ENCODE measurements at regions of chr13 and their contacts with region 1.

Region 1: DNA sequence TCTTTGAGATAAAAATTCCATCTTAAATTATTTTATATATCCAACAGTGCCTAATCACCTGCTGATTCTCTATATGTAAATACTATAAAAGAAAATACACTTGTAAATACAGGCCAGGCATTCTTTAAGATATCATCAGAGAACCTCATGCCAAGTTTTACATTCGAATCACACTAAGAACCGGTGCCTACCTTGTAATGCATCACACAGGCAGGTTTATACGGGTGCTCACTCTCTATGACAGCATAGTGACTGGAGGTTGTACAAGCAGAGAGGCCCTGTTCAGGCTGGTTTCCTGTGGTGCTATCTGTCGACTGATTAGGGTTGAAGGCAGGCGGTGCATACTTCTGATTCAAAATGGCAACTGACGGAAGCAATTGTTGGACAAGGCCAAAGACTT is 141.3 kb upstream of the FBXL3 start:
- DNase-seq: no peak
- H3K4me3 ChIP-seq: no peak overlapping the region
- H3K27ac ChIP-seq: no peak overlapping the region
- H3K4me1 ChIP-seq: no peaks in the 10 kb centered on the region
- H3K27me3 ChIP-seq: no peaks in the 10 kb centered on the region
- CTCF ChIP-seq: no peak
- POLR2A ChIP-seq: no peak

Region 2: GRCh38 chr13:77143435-77143834 is 24.8 kb before region 1 on chr13:
- intact Hi-C with region 1: loop called (anchors 2 kb)
- DNase-seq: peak; percentile 58
- H3K4me3 ChIP-seq: no peak overlapping the region
- H3K27ac ChIP-seq: no peak overlapping the region
- H3K4me1 ChIP-seq: no peaks in the 10 kb centered on the region
- H3K27me3 ChIP-seq: no peaks in the 10 kb centered on the region
- CTCF ChIP-seq: no peak
- POLR2A ChIP-seq: no peak

Measured in prostate gland (tissue), 2 donors.